Ascending aorta (tissue), 2 donors: ENCODE measurements at regions of chr7 and their contacts with region 1.

Region 1: GRCh38 chr7:29408841-29409243 is 154.8 kb upstream of the PRR15 start:
- DNase-seq: peak in 1 of 2 donors; percentile 73
- H3K4me3 ChIP-seq: no peak overlapping the region
- H3K27ac ChIP-seq: no peak overlapping the region
- H3K4me1 ChIP-seq: no peaks in the 10 kb centered on the region
- H3K27me3 ChIP-seq: no peaks in the 10 kb centered on the region
- CTCF ChIP-seq: peak; percentile 78 to 84 (median 82)

Region 2: DNA sequence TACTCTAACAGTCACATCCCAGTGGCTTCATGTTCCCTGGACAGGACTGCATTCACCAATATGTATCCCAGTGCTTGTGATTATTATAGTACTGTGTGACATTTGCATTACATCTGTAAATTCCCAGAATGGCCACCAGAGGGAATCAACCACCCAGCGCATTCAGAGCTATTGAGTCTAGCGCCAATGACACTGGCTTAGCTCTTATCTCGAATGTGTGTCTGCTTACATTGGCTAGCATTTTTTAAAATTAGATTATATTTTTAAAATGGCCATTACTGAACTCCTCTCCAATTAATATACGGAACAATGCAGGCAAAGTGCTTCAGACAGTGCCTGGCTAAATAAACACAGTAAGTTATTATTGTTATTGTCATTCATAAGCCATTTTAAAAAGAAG is 487.0 kb before region 1 on chr7:
- intact Hi-C with region 1: loop called (anchors 1 kb)
- DNase-seq: no peak
- H3K4me3 ChIP-seq: no peak overlapping the region
- H3K27ac ChIP-seq: no peak overlapping the region
- H3K4me1 ChIP-seq: peaks cover 0 to 5% of the 10 kb centered on the region in 2 donors
- H3K27me3 ChIP-seq: no peaks in the 10 kb centered on the region
- CTCF ChIP-seq: peak; percentile 61 to 83 (median 82)

Region 3: DNA sequence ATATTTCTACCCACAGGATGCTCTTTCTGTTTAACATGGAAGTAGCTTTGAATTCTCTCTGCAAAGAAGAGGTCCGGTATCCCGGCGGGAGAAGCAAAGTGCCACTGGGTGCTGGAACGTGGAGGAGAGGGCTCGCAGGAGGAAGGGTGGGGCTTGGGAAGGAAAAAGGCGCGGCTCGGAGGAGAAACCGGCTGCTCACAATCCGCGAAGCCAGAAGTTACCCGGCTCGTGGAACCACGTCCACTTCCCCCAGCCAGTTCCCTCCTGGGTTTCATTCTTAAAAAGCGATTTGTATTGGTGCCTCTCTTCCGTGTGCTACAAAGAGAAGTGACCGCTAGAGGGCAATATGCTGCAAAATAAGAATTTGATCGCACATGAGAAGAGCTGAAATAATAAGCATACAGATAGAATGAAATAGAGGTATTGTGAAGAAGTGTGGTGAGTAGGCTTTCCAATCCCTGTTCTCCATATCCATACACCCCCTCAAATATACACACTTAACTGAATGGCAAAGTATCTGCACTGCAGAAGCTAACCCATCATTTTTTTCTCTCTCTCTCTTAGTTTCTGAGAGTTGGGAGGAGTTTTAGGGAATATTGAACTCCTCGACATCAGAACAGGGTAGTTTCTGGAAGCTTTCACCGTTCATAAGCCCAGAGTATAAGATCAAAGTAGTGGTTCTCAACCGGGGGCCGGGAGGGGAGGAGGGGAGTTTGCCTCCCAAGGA is 481.8 kb before region 1 on chr7:
- intact Hi-C with region 1: loop called (anchors 1 kb)
- DNase-seq: peak; percentile 33 to 89
- H3K4me3 ChIP-seq: peak overlapping the region; percentile 61 to 65
- H3K27ac ChIP-seq: no peak overlapping the region
- H3K4me1 ChIP-seq: peaks cover 0 to 5% of the 10 kb centered on the region in 2 donors
- H3K27me3 ChIP-seq: no peaks in the 10 kb centered on the region
- CTCF ChIP-seq: peak; percentile 71 to 78 (median 74)

Region 4: GRCh38 chr7:29105752-29106668 is 302.8 kb before region 1 on chr7:
- intact Hi-C with region 1: loop called (anchors 10 kb)
- DNase-seq: no peak
- H3K4me3 ChIP-seq: no peak overlapping the region
- H3K27ac ChIP-seq: no peak overlapping the region
- H3K4me1 ChIP-seq: no peaks in the 10 kb centered on the region
- H3K27me3 ChIP-seq: no peaks in the 10 kb centered on the region
- CTCF ChIP-seq: peak; percentile 56 to 84 (median 56)

Region 5: DNA sequence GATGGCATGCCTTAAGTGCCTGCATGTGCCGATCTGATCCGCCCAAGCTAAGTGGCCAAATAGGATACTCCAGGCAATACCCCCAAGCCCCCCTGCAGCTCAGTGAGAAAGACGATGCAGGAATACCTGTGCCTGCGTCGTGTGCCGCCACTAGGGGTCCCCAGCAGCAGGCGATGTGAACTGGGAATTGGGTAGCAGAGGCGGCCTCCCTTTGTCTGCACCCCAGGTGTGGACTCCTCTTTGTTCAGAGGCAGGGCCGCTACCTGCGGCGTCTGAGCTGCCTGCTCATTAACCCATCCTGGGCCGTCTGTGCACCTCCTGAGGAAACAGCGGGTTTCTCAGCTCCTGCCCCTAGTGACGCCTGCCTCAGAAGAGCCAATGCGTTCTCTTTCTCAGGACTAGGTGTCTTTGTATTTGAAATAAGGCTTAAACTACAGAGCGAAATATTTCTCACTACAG is 219.1 kb before region 1 on chr7:
- intact Hi-C with region 1: loop called (anchors 1 kb)
- DNase-seq: no peak
- H3K4me3 ChIP-seq: no peak overlapping the region
- H3K27ac ChIP-seq: no peak overlapping the region
- H3K4me1 ChIP-seq: no peaks in the 10 kb centered on the region
- H3K27me3 ChIP-seq: no peaks in the 10 kb centered on the region
- CTCF ChIP-seq: peak; percentile 40 to 77 (median 55)